ENCODE measurements at regions of chr19 and their contacts with region 1.

Region 1: GRCh38 chr19:9796113-9796773 is 22.6 kb downstream of the FBXL12 start:
- DNase-seq: peak; percentile 98
- ATAC-seq: peak; percentile 56
- H3K4me3 ChIP-seq: peak overlapping the region; percentile 30; the same call in 1 of the 2 replicates
- H3K27ac ChIP-seq: no peak overlapping the region
- H3K4me1 ChIP-seq: peaks cover 16% of the 10 kb centered on the region
- H3K27me3 ChIP-seq: no peaks in the 10 kb centered on the region
- CTCF ChIP-seq: peak; percentile 98

Region 2: DNA sequence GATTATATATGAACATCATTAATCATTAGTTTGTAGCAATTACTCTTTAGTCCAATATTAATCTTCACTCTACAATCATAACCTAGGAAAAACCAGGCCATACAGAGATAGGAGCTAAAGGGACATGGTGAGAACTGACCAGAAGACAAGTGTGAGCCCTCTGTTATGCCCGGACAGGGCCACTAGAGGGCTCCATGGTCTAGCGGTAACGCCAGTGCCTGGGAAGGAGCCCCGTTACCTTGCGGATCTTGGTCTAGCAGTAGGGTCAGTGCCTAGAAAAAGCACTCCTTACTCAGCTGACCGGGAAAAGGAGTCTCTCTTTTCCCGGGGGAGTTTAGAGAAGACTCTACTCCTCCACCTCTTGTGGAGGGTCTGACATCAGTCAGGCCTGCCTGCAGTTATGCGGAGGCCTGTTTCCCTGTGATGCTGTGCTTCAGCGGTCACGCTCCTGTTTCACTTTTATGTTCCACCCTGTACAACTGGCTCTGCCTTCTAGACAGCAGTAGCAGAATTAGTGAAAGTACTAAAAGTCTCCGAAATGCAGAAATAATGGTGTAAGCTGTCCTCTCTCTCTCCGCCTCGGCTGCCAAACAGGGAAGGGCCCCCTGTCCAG is 590.6 kb before region 1 on chr19:
- CTCF ChIA-PET with region 1: no interaction called
- POLR2A ChIA-PET with region 1: no interaction called
- intact Hi-C with region 1: loop called (anchors 1 kb)
- DNase-seq: peak; percentile 89
- ATAC-seq: peak; percentile 94
- H3K4me3 ChIP-seq: peak overlapping the region; percentile 54
- H3K27ac ChIP-seq: no peak overlapping the region
- H3K4me1 ChIP-seq: no peaks in the 10 kb centered on the region
- H3K27me3 ChIP-seq: no peaks in the 10 kb centered on the region
- CTCF ChIP-seq: peak; percentile 84

Region 3: DNA sequence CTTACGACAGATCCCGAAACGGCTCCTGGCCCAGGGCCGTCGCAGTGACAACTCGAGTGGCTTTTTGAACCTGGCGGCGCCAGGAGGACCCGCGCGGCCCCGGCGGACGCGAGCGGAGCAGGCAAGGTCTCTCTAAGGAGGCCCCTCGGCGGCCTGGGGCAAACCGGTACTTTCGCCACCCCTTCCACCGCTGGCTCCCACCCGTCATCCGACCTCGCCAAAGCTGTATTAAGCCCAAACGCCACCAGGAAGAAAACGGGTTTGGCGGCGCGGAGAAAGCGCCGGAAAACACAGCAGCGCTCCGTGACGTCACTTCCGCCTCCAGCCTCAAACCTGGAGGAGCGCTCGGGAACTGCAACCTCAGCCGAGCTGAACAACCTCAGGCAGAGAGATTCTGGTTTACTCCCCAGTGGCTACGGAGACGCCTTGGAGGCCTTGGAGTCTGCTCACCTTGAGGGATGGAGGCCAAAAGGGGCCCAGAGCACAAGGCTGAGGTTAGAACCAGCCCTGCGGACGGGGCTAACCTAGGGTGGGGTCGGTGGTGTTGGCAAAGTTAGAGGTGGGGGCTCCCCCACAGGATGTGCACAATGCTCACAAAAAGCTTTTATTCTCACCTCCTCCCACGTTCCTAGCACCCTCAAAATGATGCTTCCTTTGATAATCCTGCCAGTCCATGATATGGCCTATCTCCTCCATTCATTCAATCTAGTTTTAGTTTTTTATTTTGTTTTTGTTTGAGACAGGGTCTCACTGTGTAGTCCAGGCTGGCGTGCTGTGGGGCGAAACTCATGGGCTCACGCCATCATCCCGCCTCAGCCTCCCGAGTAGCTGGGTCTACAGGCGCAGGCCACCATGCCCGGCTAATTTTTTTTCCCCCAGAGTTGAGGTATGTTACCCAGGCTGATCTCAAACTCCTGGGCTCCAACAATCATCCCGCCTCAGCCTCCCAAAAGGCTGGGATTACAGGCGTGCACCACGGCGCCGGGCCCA is 360.7 kb before region 1 on chr19 and contains the start of gene ZNF266:
- CTCF ChIA-PET with region 1: no interaction called
- POLR2A ChIA-PET with region 1: no interaction called
- intact Hi-C with region 1: loop called (anchors 1 kb)
- DNase-seq: peak; percentile 97
- ATAC-seq: peak; percentile 90
- H3K4me3 ChIP-seq: peak within 1 kb of the TSS; percentile 85
- H3K27ac ChIP-seq: peak within 1 kb of the TSS; percentile 41
- H3K4me1 ChIP-seq: peaks cover 7% of the 10 kb centered on the region; the same call in 1 of the 2 replicates
- H3K27me3 ChIP-seq: no peaks in the 10 kb centered on the region
- CTCF ChIP-seq: peak; percentile 46
- total RNA-seq, gene ZNF266: 31.9 and 32.8 TPM in 2 replicates

Region 4: GRCh38 chr19:9621156-9622037 is 174.8 kb before region 1 on chr19 and contains the start of gene ZNF561:
- CTCF ChIA-PET with region 1: no interaction called
- POLR2A ChIA-PET with region 1: interaction called, 5 read pairs
- intact Hi-C with region 1: loop called (anchors 1 kb)
- DNase-seq: peak; percentile 79
- ATAC-seq: peak; percentile 83
- H3K4me3 ChIP-seq: peak within 1 kb of the TSS; percentile 86
- H3K27ac ChIP-seq: peak within 1 kb of the TSS; percentile 73
- H3K4me1 ChIP-seq: no peaks in the 10 kb centered on the region
- H3K27me3 ChIP-seq: no peaks in the 10 kb centered on the region
- CTCF ChIP-seq: no peak
- total RNA-seq, gene ZNF561: 20.1 and 23.3 TPM in 2 replicates

Region 5: GRCh38 chr19:9818734-9819589 is 22.7 kb after region 1 on chr19 and contains the start of gene FBXL12:
- CTCF ChIA-PET with region 1: no interaction called
- POLR2A ChIA-PET with region 1: no interaction called
- intact Hi-C with region 1: loop called (anchors 1 kb)
- DNase-seq: peak; percentile 100
- ATAC-seq: peak; percentile 85
- H3K4me3 ChIP-seq: peak within 1 kb of the TSS; percentile 82
- H3K27ac ChIP-seq: peak within 1 kb of the TSS; percentile 62
- H3K4me1 ChIP-seq: peaks cover 13% of the 10 kb centered on the region
- H3K27me3 ChIP-seq: no peaks in the 10 kb centered on the region
- CTCF ChIP-seq: no peak
- total RNA-seq, gene FBXL12: 31.4 and 37.6 TPM in 2 replicates

Measured in PC-3 (cell line).